ENCODE measurements at regions of chr13 and their contacts with region 1.

Region 1: GRCh38 chr13:53782488-53782961 is 753.9 kb downstream of the OLFM4 start:
- H3K4me3 ChIP-seq: no peak overlapping the region
- H3K27ac ChIP-seq: no peak overlapping the region
- H3K4me1 ChIP-seq: no peaks in the 10 kb centered on the region
- CTCF ChIP-seq: no peak

Region 2: GRCh38 chr13:53250266-53250875 is 532.2 kb before region 1 on chr13:
- CTCF ChIA-PET with region 1: interaction called, 19 read pairs
- POLR2A ChIA-PET with region 1: no interaction called
- H3K4me3 ChIP-seq: no peak overlapping the region
- H3K27ac ChIP-seq: no peak overlapping the region
- H3K4me1 ChIP-seq: no peaks in the 10 kb centered on the region
- CTCF ChIP-seq: no peak

Region 3: GRCh38 chr13:55245005-55245644 is 1462.6 kb after region 1 on chr13:
- CTCF ChIA-PET with region 1: interaction called, 11 read pairs
- POLR2A ChIA-PET with region 1: no interaction called
- H3K4me3 ChIP-seq: no peak overlapping the region
- H3K27ac ChIP-seq: no peak overlapping the region
- H3K4me1 ChIP-seq: no peaks in the 10 kb centered on the region
- CTCF ChIP-seq: no peak

Measured in HEK293 (cell line).